Mammary epithelial cell (primary cell): ENCODE measurements at regions of chr7 and their contacts with region 1.

Region 1: DNA sequence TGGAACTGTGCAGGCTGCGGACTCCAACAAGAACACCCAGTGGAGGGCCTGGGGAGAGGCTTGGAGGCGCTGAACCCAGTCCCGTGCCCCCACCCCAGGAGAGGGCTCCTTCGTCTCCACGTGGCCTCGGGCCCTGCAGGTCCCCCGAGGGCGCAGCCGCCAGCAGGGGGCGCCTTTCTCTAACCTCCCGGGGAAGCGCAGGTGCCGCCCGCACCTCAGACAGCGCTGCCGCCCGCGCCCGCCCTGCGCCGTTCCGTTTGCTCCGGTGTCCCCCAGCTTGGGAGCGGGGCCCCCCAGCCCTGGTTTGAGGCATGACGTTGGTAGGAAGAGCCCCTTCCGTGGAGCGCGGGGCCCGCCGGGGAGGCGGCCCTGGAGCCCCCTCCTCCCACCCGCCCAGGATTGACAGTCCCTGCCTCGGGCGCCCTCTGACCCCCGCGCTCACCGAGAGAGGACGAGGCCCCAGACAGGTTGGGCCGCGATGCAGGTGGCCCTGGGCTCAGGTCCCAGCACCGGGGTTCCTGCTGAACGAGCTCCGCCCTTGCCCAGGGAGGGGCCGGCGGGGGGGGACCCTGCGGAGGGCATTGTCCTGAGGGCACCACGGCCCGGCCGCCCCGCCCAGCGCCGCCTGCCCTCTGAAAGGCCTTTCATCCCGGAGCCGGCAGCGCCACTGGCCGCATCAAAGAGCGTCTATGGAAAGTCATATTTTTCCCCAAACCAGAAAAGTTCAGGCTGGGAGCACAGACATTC is 42.8 kb downstream of the FOXL3 start:
- DNase-seq: peak; percentile 38
- H3K4me3 ChIP-seq: peak overlapping the region; percentile 28 to 40 (median 28)
- H3K27ac ChIP-seq: no peak overlapping the region
- H3K4me1 ChIP-seq: peaks cover 15% of the 10 kb centered on the region
- H3K27me3 ChIP-seq: peaks cover 2% of the 10 kb centered on the region
- CTCF ChIP-seq: peak; percentile 42 to 92

Region 2: DNA sequence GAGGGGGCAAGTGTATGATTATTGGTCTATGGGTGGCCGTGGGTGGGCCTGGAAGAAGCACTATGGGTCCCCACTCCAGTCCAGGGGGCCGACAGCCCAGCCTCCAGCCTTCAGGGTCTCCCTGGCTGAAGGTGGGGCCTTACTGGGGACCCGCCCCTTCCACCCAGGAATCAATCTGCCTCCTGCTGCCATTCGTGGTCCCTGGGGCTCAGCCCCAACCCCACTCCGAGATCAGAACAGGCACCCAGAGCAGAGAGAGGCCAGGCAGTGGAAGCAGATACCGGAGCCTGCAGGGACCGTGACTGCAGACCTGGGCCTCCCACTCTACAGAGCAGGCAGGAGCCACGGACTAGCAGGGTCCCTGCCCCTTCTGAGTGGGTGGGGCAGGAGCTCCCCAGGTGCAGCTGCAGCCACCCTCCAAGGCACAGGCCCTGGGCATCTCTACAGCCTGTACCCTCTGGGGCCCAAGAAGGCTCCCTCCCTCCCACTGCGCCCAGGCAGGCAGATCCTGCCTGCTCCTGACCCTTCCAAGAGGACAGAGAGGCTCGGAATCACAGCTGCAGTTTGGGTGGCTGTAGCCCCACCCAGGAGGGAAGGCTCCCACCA is 56.5 kb before region 1 on chr7:
- CTCF ChIA-PET with region 1: no interaction called
- dilution Hi-C with region 1: loop called (anchors 5 kb)
- in situ Hi-C with region 1: no loop called
- intact Hi-C with region 1: no loop called
- DNase-seq: no peak
- H3K4me3 ChIP-seq: no peak overlapping the region
- H3K27ac ChIP-seq: no peak overlapping the region
- H3K4me1 ChIP-seq: no peaks in the 10 kb centered on the region
- H3K27me3 ChIP-seq: no peaks in the 10 kb centered on the region
- CTCF ChIP-seq: no peak

Region 3: GRCh38 chr7:311796-312195 is 21.0 kb before region 1 on chr7:
- CTCF ChIA-PET with region 1: no interaction called
- dilution Hi-C with region 1: no loop called
- in situ Hi-C with region 1: no loop called
- intact Hi-C with region 1: no loop called
- DNase-seq: peak; percentile 68
- H3K4me3 ChIP-seq: no peak overlapping the region
- H3K27ac ChIP-seq: no peak overlapping the region
- H3K4me1 ChIP-seq: peaks cover 11% of the 10 kb centered on the region
- H3K27me3 ChIP-seq: no peaks in the 10 kb centered on the region
- CTCF ChIP-seq: no peak

Region 4: DNA sequence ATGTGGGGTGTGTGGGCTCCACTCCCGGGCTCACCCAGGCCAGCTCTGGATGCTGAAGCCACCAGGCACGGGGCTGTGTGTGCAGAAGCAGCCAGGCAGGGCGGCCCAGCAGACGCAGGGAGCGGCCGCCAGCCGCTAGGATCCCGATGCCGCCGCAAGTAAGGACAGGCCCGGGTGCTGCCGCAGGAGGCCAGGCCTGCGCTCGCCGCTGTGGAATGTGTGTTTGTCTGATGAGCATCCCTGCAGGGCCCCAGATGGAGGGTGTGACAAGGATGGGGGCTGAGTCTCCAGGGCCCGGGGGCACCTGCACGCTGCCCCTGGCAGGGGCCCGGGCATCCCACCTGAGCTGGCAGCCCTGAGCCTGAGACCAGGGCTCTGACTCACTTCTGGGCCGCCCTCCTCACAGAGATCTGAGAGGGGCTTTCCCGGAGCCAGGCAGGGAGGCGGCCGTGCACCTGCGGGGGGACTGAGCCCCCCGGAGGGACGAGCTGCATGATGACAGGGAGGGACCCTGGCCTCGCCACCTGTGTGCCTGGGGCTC is 58.7 kb after region 1 on chr7:
- CTCF ChIA-PET with region 1: no interaction called
- dilution Hi-C with region 1: loop called (anchors 5 kb)
- in situ Hi-C with region 1: no loop called
- intact Hi-C with region 1: no loop called
- DNase-seq: peak; percentile 74
- H3K4me3 ChIP-seq: no peak overlapping the region
- H3K27ac ChIP-seq: no peak overlapping the region
- H3K4me1 ChIP-seq: peaks cover 17% of the 10 kb centered on the region
- H3K27me3 ChIP-seq: no peaks in the 10 kb centered on the region
- CTCF ChIP-seq: no peak

Region 5: DNA sequence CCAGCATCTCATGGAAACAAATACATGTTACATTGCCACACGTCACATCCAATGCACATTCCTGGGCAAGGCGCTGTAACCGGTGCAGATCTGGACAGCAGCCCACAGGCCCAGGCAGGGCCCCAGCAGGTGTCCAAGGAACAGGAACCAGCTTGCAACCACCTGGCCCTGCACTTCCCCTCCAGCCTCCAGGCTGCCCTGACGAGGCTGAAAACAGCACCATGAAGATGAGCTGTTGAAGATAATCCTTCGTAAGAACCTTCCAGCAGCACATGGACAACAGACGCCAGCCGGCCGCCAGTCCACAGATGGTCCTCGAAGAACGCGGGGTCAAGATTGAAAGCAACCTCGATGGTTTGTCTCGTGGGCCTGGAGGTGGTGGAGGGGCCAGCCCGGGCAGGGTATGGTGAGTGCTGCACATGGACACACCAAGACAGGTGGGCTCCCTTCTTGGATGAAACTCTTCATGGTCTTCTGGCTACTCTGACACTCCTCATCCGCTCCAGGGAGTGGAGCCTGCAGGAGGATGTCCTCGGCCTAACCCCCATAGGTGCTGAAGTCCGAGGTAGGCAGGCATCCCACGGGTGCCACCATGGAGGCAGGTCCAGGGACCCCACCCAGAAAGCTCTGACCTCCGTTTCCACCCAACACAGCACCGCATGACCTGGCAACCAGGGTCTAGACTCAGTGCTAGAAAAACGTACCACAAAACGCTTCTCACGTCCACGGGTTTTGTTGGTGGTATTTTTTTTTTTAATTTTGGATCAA is 163.9 kb after region 1 on chr7:
- CTCF ChIA-PET with region 1: no interaction called
- dilution Hi-C with region 1: loop called (anchors 5 kb)
- in situ Hi-C with region 1: no loop called
- intact Hi-C with region 1: loop called (anchors 2 kb)
- DNase-seq: peak; percentile 90
- H3K4me3 ChIP-seq: no peak overlapping the region
- H3K27ac ChIP-seq: peak overlapping the region; percentile 56
- H3K4me1 ChIP-seq: peaks cover 30% of the 10 kb centered on the region
- H3K27me3 ChIP-seq: no peaks in the 10 kb centered on the region
- CTCF ChIP-seq: peak in 1 of 2 donors; percentile 18

Region 6: DNA sequence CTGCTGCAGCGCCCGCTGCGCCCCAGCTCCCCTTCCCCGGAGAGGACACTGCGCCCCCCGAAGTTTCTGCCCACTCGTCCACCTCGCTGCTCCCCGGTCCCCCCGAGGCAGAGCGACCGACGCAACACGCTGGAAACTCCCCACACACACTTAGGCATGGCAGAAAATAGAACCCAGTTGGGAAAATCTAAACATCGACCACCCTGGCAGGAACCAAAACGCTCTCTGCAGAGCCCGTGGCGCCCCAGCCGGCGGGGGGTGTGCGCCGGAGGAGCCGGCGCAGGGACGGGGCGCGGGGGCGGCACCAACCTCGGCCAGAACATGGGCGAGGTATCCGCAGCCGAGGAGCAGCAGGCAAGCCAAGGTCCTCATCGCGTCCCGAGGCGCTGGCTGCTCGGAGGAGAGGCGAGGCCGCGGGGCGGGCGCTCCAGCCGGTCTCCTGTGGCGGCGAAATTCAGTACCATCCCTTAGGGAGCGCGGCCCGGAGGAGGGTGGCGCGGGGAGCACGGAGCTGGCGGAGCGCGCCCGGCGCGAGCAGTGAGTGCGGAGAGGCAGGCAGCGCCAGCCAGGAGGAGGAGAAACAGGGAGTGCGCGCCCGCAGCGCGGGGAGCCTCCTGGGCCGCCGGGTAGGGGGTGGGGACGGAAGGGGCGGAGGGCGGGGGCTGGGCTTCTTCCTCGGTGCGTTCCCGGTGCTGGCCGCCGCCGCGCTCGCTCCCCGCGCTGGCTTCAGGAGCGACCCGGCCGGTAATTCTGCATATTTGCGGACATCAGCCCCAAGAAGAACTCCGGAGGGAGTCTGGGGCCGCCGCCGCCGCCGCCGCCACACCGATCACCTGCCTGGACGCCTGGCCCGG is 186.0 kb after region 1 on chr7:
- CTCF ChIA-PET with region 1: interaction called, 3 read pairs
- dilution Hi-C with region 1: no loop called
- in situ Hi-C with region 1: loop called in 1 of 2 experiments (anchors 10 kb)
- intact Hi-C with region 1: loop called (anchors 1 kb)
- DNase-seq: peak; percentile 82
- H3K4me3 ChIP-seq: peak overlapping the region; percentile 66 to 92 (median 88)
- H3K27ac ChIP-seq: peak overlapping the region; percentile 46
- H3K4me1 ChIP-seq: peaks cover 50% of the 10 kb centered on the region
- H3K27me3 ChIP-seq: no peaks in the 10 kb centered on the region
- CTCF ChIP-seq: no peak

Region 7: DNA sequence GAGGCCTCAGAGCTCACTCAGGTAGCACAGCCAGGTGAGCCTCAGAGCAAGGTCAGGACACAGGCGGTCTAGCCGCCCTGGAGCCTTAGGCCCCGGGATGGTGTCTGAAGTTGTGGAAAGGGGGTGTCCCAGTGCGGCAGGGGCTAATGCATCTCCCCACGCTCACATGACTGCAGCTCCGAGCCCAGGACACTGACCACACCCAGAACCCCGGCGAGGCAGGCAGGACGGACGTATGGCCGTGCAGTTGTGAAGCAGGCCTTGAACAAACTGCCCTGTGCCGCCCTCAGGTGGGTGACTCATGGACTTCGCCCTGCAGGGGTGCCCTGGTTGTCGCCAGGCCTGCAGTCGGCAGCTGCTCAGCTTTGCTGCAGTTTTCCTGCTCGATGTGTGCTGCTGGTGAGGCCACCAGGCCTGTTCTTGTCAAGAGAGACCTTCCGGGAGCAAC is 399.3 kb after region 1 on chr7:
- CTCF ChIA-PET with region 1: no interaction called
- dilution Hi-C with region 1: no loop called
- in situ Hi-C with region 1: no loop called
- intact Hi-C with region 1: loop called (anchors 5 kb)
- DNase-seq: no peak
- H3K4me3 ChIP-seq: no peak overlapping the region
- H3K27ac ChIP-seq: no peak overlapping the region
- H3K4me1 ChIP-seq: peaks cover 9% of the 10 kb centered on the region
- H3K27me3 ChIP-seq: no peaks in the 10 kb centered on the region
- CTCF ChIP-seq: no peak